ENCODE measurements at regions of chr12 and their contacts with region 1.

Region 1: DNA sequence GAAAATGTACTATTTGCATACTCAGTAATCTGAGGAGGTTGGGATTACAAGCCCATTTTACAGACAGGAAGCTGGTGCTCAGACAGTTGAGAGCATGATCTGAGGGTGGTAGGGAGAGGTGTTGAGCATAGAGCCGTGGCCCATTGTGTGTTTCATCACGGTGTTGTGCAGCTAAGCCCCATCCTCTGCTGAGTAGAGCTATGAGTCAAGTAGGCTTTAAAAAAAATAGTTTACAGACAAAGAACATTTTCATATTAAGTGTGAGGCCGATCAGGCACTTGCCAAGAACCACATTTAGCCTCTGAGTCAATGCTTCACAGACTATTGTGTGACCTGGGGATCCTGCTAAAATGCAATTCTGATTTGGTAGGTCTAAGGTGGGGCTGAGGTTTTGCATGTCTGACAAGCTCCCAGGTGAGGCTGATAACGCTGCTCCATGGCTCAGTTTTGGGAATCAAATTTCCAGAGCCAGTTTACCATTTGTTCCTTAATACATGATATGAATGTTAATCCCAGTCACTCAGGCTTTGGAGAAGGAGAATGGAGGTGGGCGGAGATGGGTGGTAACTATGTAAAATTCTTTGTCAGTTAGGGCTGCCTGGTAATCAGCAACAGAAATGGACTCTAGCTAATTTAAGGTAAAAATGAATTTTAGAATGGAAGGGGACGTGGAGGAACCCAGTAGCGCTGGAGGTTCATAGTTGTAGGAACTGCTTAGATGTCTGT is 22.2 kb downstream of the ZNF664 start:
- DNase-seq: no peak
- CTCF ChIP-seq: no peak

Region 2: GRCh38 chr12:123919980-123920360 is 75.2 kb before region 1 on chr12:
- CTCF ChIA-PET with region 1: no interaction called
- POLR2A ChIA-PET with region 1: no interaction called
- DNase-seq: no peak
- CTCF ChIP-seq: no peak

Region 3: DNA sequence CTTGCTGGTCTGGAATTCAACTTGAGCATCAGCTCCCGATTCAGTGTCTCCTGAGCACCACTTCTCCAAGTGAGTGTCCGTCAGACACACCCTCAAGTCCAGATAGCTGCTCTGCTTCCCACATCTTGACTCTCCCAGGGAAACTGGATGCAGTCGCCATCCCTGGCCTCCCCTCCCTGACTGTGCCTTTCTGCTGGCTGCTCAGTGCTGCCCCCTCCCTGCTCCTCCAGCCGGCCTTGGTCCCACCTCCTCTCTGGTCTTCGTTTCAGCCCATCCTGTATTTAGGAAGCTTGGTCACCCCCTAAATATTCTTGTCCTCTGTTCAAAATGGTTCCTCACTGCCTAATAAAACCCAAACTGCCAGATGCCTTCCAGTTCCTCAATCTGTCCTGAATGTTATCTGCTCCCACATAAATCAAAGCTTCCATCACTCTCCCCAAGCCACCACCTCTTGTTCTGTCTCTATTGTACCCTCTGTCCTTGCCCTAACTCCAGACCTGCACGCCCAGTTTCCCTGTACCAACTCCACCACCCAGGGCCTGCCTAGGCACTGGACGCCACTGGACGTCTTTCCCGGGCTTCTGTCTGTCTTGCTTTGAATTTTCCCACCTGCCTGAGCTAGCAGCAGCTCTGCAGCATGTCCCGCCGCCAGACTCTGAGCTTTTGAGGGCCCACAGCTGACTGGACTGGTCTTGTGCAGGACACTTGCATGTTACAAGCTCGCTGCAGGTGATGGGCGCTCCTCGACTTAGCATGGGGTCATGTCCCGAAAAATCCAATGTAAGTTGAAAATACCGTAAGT is 56.3 kb before region 1 on chr12:
- CTCF ChIA-PET with region 1: no interaction called
- POLR2A ChIA-PET with region 1: no interaction called
- DNase-seq: no peak
- CTCF ChIP-seq: peak; percentile 28

Region 4: DNA sequence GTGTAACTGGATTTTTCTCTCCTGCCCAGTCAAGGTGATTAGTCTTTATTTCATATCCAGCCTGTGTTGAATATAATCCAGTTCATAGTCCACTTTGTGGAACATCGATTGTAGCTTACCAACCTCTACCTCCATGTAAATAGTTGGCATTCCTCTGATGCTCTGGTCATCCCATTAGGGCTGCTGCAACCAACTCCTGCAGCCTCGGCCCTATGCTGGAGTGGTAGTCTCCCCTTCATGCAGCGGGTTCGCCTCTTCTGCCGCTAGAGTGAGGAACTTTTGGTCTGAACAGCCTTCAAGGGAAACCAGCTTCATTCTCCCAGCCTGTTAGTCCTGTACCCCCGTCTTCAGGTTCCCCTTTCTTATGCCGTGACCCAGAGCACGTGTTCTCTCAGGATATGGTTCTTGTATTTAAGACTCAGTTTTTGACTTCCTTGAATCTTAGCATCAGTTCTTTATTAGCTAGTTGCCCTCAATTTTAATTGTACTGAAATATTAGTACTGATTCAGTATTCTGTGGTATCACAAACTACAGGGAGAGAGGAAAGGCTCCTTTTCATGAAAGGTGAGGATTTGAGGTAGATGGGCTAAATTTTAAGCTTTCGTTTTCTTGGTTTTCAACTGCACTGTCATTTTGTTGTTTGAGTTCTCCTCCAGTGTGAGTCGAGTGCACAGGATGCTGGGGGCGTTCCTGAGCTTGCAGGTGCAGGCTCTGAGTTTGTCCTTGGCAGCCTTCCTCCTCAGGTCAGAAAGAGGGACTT is 11.1 kb after region 1 on chr12:
- CTCF ChIA-PET with region 1: interaction called, 10 read pairs
- POLR2A ChIA-PET with region 1: no interaction called
- DNase-seq: peak; percentile 66
- CTCF ChIP-seq: no peak